Posterior cingulate gyrus (tissue), 11 donors: ENCODE measurements at regions of chr22 and their contacts with region 1.

Region 1: GRCh38 chr22:40950962-40951794 is at the start of gene RBX1:
- DNase-seq: peak; percentile 96 to 100 (median 98)

Region 2: GRCh38 chr22:40791241-40791640 is 159.9 kb before region 1 on chr22:
- intact Hi-C with region 1: no loop called
- DNase-seq: no peak

Region 3: GRCh38 chr22:41197038-41197972 is 246.1 kb after region 1 on chr22:
- intact Hi-C with region 1: loop called (anchors 5 kb)
- DNase-seq: peak; percentile 73 to 98 (median 85)